A549 (cell line): ENCODE measurements at regions of chr18 and their contacts with region 1.

Region 1: GRCh38 chr18:24530630-24531111 is 70.2 kb downstream of the HRH4 start:
- DNase-seq: peak in 1 of 2 experiments; percentile 7
- ATAC-seq: peak in 1 of 2 experiments; percentile 50; a peak in 1 of 6 replicates
- H3K4me3 ChIP-seq: no peak overlapping the region
- H3K27ac ChIP-seq: no peak overlapping the region
- H3K4me1 ChIP-seq: no peaks in the 10 kb centered on the region
- CTCF ChIP-seq: no peak
- EP300 ChIP-seq: no peak
- POLR2A ChIP-seq: no peak
- RAD21 ChIP-seq: no peak

Region 2: GRCh38 chr18:24380163-24380747 is 150.4 kb before region 1 on chr18:
- CTCF ChIA-PET with region 1: no interaction called
- POLR2A ChIA-PET with region 1: no interaction called
- DNase-seq: no peak
- ATAC-seq: no peak
- H3K4me3 ChIP-seq: no peak overlapping the region
- H3K27ac ChIP-seq: no peak overlapping the region
- H3K4me1 ChIP-seq: no peaks in the 10 kb centered on the region
- CTCF ChIP-seq: no peak
- EP300 ChIP-seq: no peak
- POLR2A ChIP-seq: no peak
- RAD21 ChIP-seq: no peak

Region 3: GRCh38 chr18:24413148-24413547 is 117.5 kb before region 1 on chr18:
- CTCF ChIA-PET with region 1: no interaction called
- POLR2A ChIA-PET with region 1: no interaction called
- DNase-seq: peak in 1 of 2 experiments; percentile 9
- ATAC-seq: peak in 1 of 2 experiments; percentile 36; a peak in 1 of 6 replicates
- H3K4me3 ChIP-seq: no peak overlapping the region
- H3K27ac ChIP-seq: no peak overlapping the region
- H3K4me1 ChIP-seq: no peaks in the 10 kb centered on the region
- CTCF ChIP-seq: no peak
- EP300 ChIP-seq: no peak
- POLR2A ChIP-seq: no peak
- RAD21 ChIP-seq: peak in 1 of 2 experiments; percentile 17; a peak in 1 of 5 replicates

Region 4: DNA sequence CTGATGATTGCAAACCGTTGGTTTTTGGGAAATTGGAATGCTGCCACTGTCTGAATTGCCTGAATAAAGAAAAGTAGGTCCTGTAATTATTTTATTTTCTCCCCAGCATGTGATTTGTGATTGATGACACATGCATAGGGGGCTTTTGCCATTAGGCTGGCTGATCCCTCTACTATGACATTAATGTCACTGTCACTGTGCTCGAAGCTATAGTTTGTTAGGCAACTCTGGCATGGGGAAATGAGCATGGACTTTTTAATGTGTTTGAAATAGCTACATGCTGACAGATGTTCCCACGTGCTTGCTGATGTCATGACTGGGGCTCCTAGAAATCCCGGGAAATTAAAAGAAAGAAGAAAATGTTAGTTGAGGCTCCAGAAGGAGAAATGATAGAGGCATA is 28.9 kb after region 1 on chr18:
- CTCF ChIA-PET with region 1: no interaction called
- POLR2A ChIA-PET with region 1: interaction called, 12 read pairs
- DNase-seq: no peak
- ATAC-seq: no peak
- H3K4me3 ChIP-seq: no peak overlapping the region
- H3K27ac ChIP-seq: no peak overlapping the region
- H3K4me1 ChIP-seq: no peaks in the 10 kb centered on the region
- CTCF ChIP-seq: no peak
- EP300 ChIP-seq: no peak
- POLR2A ChIP-seq: no peak
- RAD21 ChIP-seq: no peak